ENCODE measurements at regions of chr5 and their contacts with region 1.

Region 1: GRCh38 chr5:150734579-150735384 is 24.0 kb downstream of the DCTN4 start:
- H3K4me3 Mint-ChIP-seq: peak overlapping the region; percentile 82
- H3K27ac Mint-ChIP-seq: peak overlapping the region; percentile 97
- H3K4me1 Mint-ChIP-seq: peaks cover 70% of the 10 kb centered on the region
- H3K27me3 Mint-ChIP-seq: no peaks in the 10 kb centered on the region

Region 2: DNA sequence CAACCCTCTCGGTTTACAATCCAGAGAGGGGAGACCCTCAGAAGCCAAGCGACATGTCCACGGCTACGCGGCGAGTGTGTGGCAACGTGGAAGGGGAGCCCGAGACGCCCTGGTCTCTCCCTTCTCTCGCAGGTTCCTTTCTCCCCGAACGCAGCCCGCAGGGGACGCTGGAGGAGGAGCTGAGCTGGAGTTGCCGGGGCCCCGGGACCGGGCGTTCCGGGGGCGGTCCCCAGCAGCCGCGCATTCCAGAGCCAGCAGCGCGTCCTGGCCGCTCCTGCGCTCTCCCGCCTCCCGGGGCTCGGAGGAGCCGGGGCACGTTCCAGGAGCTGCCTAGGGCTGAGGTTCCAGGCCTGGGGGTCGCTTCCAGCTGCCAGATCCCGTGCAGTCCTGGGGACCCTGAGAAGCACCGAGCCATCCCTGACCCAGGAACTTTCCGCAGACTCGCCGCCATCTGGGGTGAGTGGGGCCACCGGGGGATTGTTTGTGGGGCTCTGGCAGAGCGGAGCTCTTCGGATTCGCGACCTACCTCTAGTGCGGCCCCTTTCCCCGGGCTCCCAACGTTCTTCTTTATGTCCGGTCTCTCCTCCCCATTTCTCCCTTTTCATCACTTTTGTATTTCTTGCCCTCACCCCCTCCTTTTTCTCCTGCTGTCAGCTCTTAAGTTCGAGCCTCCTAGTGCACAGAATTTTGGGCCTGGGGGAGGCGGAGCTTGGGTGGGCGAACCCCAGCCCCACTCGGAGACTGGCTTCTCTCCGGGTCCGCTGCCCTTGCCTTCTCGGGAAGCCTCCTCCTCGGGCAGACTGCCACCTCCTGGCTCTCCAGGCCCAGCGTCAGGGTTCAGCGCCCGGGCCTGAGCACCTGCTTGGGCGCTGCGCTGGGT is 44.0 kb after region 1 on chr5 and contains the start of gene SMIM3:
- intact Hi-C with region 1: loop called (anchors 2 kb)
- H3K4me3 Mint-ChIP-seq: peak within 1 kb of the TSS; percentile 100
- H3K27ac Mint-ChIP-seq: peak within 1 kb of the TSS; percentile 91
- H3K4me1 Mint-ChIP-seq: peaks cover 58% of the 10 kb centered on the region
- H3K27me3 Mint-ChIP-seq: no peaks in the 10 kb centered on the region

Region 3: DNA sequence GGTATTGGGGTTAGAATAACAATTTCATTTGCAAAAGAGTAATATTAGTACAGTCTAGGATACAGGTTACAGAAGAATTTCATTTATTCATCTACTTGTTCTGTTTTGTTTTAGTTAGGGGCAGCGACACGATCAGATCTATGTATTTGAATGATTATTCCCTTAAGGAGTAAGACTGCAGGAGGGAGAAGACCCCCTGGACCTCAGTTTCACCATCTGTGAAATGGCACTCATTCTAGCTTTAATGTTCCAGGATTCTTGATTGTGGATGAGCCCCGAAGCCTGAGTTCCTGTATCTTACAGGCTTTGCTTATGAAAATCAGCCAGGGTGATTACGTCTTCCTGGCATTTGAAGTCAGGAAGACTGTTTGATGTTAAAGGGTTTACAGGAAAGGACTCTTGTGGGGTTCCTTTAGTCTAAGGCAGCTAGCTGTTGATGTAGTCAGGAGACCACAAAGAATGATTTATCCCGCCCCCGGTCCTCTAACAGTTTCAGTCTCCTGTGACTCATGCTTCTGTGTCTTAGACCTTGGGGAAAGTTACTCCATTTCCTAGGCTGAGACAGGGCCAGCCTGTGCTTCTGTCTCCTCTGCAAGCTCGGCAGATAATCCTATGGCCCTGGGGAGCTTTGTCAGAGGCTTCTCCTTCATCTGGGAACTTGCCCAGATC is 55.3 kb after region 1 on chr5:
- intact Hi-C with region 1: loop called (anchors 5 kb)
- H3K4me3 Mint-ChIP-seq: peak overlapping the region; percentile 21
- H3K27ac Mint-ChIP-seq: peak overlapping the region; percentile 51
- H3K4me1 Mint-ChIP-seq: peaks cover 51% of the 10 kb centered on the region
- H3K27me3 Mint-ChIP-seq: no peaks in the 10 kb centered on the region

Measured in dendritic cell treated with granulocyte-macrophage colony-stimulating factor and Interleukin-4, amounts not matched to agents 40 ng/mL and 50 ng/mL, for 4 days (primary cell).